ENCODE measurements at regions of chr7 and their contacts with region 1.

Region 1: DNA sequence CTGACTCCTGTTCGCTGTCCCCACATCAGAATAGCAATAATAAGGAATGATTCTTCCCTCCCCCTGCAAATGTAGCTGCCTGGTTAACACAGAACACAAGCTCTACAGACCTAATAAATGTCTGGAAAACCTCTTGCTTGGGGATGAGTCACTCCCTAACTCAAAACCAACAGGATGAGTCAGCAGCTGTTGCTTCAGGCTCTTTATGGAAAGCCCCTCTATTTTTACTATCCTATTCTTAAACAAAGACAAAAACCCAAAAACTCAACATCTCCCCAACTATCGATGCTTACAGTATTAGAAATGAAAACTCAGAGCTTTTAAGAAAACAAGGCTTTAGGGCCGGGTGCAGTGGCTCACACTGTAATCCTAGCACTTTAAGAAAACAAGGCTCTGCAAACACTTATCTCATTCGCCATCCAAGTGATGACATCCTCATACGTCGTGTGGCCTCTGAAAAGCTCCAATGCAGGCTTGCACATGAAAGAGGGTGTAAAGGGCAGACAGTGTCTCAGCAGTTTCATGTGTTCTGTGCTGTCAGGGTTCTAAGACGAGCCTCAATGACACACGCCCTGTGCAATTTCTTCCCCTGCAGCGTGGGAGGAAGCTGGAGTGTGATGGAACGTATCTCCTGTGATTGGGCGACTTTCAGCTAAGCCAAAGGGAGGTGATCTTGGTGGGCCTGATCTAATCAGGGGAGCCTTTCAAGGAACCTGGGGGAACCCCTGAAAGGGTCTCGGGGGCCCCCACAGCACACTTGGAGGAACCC is 70.1 kb downstream of the AMZ1 start:
- DNase-seq: peak in 2 of 9 donors; percentile 19 to 73
- ATAC-seq: peak; percentile 79
- H3K4me3 ChIP-seq: no peak overlapping the region
- H3K4me3 Mint-ChIP-seq: peak overlapping the region in 2 of 10 donors; percentile 10 to 57
- H3K27ac ChIP-seq: no peak overlapping the region
- H3K27ac Mint-ChIP-seq: peak overlapping the region in 2 of 9 donors; percentile 74 to 92
- H3K4me1 ChIP-seq: peaks cover 0 to 29% of the 10 kb centered on the region in 2 donors
- H3K4me1 Mint-ChIP-seq: peaks cover 8 to 45% (median 20%) of the 10 kb centered on the region in 7 donors
- H3K27me3 ChIP-seq: no peaks in the 10 kb centered on the region
- H3K27me3 Mint-ChIP-seq: no peaks in the 10 kb centered on the region

Region 2: DNA sequence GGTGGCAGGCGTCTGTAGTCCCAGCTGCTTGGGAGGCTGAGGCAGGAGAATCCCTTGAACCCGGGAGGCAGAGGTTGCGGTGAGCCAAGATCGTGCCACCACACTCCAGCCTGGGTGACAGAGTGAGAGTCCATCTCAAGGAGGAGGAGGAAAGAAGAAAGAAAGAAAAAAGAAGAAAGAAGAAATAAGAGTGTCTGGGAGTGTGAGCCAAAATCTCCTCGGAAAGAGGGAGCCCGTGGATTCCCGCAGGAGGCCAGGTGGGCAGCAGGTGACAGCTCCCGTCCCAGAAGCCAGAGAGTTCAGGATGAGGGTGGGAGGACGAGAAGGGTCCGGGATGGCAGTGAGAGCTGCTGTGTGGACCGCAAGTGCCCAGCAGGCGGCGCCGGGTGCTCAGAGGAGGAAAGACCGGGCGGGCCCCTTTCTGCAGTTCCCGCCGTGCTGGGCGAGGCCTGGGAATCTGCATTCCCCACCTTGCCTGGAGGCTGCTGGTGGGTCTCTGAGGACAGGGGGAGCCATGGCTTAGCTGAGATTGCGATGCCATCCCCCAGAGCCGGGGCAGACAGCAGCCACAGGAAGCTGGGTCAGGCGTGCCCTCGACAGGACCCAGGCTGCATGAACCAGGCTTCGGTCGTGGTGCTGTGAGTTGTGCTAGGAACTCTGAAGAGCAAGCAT is 87.2 kb before region 1 on chr7:
- CTCF ChIA-PET with region 1: no interaction called
- POLR2A ChIA-PET with region 1: no interaction called
- intact Hi-C with region 1: no loop called
- DNase-seq: peak; percentile 30 to 70 (median 59)
- ATAC-seq: peak; percentile 83
- H3K4me3 ChIP-seq: no peak overlapping the region
- H3K4me3 Mint-ChIP-seq: peak overlapping the region in 1 of 10 donors; percentile 49
- H3K27ac ChIP-seq: no peak overlapping the region
- H3K27ac Mint-ChIP-seq: peak overlapping the region in 3 of 9 donors; percentile 26 to 47 (median 34)
- H3K4me1 ChIP-seq: peaks cover 6% of the 10 kb centered on the region in 2 donors
- H3K4me1 Mint-ChIP-seq: peaks cover 0 to 13% (median 4%) of the 10 kb centered on the region in 7 donors
- H3K27me3 ChIP-seq: no peaks in the 10 kb centered on the region
- H3K27me3 Mint-ChIP-seq: peaks cover 0 to 35% (median 4%) of the 10 kb centered on the region in 5 donors

Region 3: GRCh38 chr7:2773601-2774000 is 15.5 kb after region 1 on chr7:
- CTCF ChIA-PET with region 1: no interaction called
- POLR2A ChIA-PET with region 1: no interaction called
- intact Hi-C with region 1: loop called in 1 of 2 experiments (anchors 1 kb)
- DNase-seq: no peak
- ATAC-seq: no peak
- H3K4me3 ChIP-seq: no peak overlapping the region
- H3K4me3 Mint-ChIP-seq: no peak overlapping the region
- H3K27ac ChIP-seq: no peak overlapping the region
- H3K27ac Mint-ChIP-seq: no peak overlapping the region
- H3K4me1 ChIP-seq: no peaks in the 10 kb centered on the region
- H3K4me1 Mint-ChIP-seq: peaks cover 0 to 32% (median 0%) of the 10 kb centered on the region in 7 donors
- H3K27me3 ChIP-seq: no peaks in the 10 kb centered on the region
- H3K27me3 Mint-ChIP-seq: no peaks in the 10 kb centered on the region